Activated B cell treated with CpG ODN at 0.5 μM for 24 hours (primary cell): ENCODE measurements at regions of chr10 and their contacts with region 1.

Region 1: GRCh38 chr10:119165171-119166110 is at the start of gene SFXN4:
- DNase-seq: peak; percentile 83
- ATAC-seq: peak; percentile 93
- H3K4me3 Mint-ChIP-seq: peak within 1 kb of the TSS; percentile 92
- H3K27ac Mint-ChIP-seq: peak within 1 kb of the TSS; percentile 88
- H3K4me1 Mint-ChIP-seq: peaks cover 18% of the 10 kb centered on the region
- H3K27me3 Mint-ChIP-seq: no peaks in the 10 kb centered on the region
- CTCF ChIP-seq: no peak
- total RNA-seq, gene SFXN4: 18.4 and 21.7 TPM in 2 replicates

Region 2: GRCh38 chr10:119030421-119031250 is 134.8 kb before region 1 on chr10:
- CTCF ChIA-PET with region 1: no interaction called
- POLR2A ChIA-PET with region 1: interaction called, 4 read pairs
- intact Hi-C with region 1: loop called (anchors 1 kb)
- DNase-seq: peak; percentile 72
- ATAC-seq: peak; percentile 80
- H3K4me3 Mint-ChIP-seq: peak overlapping the region; percentile 75
- H3K27ac Mint-ChIP-seq: peak overlapping the region; percentile 68
- H3K4me1 Mint-ChIP-seq: peaks cover 22% of the 10 kb centered on the region
- H3K27me3 Mint-ChIP-seq: peaks cover 23% of the 10 kb centered on the region
- CTCF ChIP-seq: no peak

Region 3: GRCh38 chr10:119103903-119104652 is 61.4 kb before region 1 on chr10 and contains the start of gene DENND10:
- CTCF ChIA-PET with region 1: no interaction called
- POLR2A ChIA-PET with region 1: interaction called, 6 read pairs
- intact Hi-C with region 1: loop called (anchors 1 kb)
- DNase-seq: peak; percentile 69
- ATAC-seq: peak; percentile 91
- H3K4me3 Mint-ChIP-seq: peak within 1 kb of the TSS; percentile 75
- H3K27ac Mint-ChIP-seq: peak within 1 kb of the TSS; percentile 68
- H3K4me1 Mint-ChIP-seq: peaks cover 16% of the 10 kb centered on the region
- H3K27me3 Mint-ChIP-seq: no peaks in the 10 kb centered on the region
- CTCF ChIP-seq: no peak
- total RNA-seq, gene DENND10: 14.4 and 15.0 TPM in 2 replicates

Region 4: GRCh38 chr10:119178372-119179119 is 13.1 kb after region 1 on chr10 and contains the start of gene PRDX3:
- CTCF ChIA-PET with region 1: no interaction called
- POLR2A ChIA-PET with region 1: interaction called, 10 read pairs
- intact Hi-C with region 1: loop called (anchors 1 kb)
- DNase-seq: peak; percentile 92
- ATAC-seq: peak; percentile 99
- H3K4me3 Mint-ChIP-seq: peak within 1 kb of the TSS; percentile 98
- H3K27ac Mint-ChIP-seq: peak within 1 kb of the TSS; percentile 93
- H3K4me1 Mint-ChIP-seq: peaks cover 26% of the 10 kb centered on the region
- H3K27me3 Mint-ChIP-seq: no peaks in the 10 kb centered on the region
- CTCF ChIP-seq: no peak
- total RNA-seq, gene PRDX3: 62.8 and 63.7 TPM in 2 replicates

Region 5: DNA sequence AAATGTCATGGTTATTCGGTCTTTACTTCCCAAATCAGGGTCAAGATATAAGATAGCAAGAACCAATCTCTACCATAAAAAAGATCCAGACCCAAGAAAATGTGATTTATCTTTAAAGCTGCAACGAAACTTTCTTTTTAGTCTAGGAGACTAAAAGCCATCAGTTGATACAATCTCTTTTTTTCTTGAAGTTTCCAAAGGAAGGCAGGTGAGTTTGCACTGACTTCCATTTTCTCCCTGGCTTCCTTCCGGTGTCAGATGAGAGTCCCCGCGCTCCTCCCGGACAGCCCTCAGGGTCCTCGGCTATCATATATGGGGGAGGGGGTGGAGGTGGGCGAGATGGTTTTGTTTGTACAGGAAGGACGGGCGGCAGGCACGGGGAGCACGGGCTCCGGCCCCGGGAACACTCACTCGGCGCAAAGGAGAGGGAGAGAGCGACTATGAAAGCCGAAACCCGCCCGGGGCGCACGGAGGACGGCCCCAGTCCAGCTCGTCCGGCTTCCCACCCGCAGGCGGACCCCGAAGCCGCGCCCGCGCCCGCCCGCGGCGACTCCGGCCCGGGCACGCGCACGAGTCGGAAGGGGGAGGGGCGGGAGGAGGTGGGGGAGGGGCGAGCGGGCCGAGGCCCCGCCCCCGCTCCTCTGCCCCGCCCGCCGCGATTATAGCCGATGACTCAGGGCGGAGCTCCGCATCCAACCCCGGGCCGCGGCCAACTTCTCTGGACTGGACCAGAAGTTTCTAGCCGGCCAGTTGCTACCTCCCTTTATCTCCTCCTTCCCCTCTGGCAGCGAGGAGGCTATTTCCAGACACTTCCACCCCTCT is 485.5 kb after region 1 on chr10 and contains the start of gene BAG3:
- CTCF ChIA-PET with region 1: no interaction called
- POLR2A ChIA-PET with region 1: no interaction called
- intact Hi-C with region 1: loop called (anchors 1 kb)
- DNase-seq: peak; percentile 73
- ATAC-seq: peak; percentile 93
- H3K4me3 Mint-ChIP-seq: peak within 1 kb of the TSS; percentile 97
- H3K27ac Mint-ChIP-seq: peak within 1 kb of the TSS; percentile 95
- H3K4me1 Mint-ChIP-seq: peaks cover 16% of the 10 kb centered on the region
- H3K27me3 Mint-ChIP-seq: no peaks in the 10 kb centered on the region
- CTCF ChIP-seq: no peak
- total RNA-seq, gene BAG3: 4.3 and 4.7 TPM in 2 replicates

Region 6: GRCh38 chr10:119872860-119873681 is 707.6 kb after region 1 on chr10:
- CTCF ChIA-PET with region 1: no interaction called
- POLR2A ChIA-PET with region 1: no interaction called
- intact Hi-C with region 1: loop called (anchors 1 kb)
- DNase-seq: peak; percentile 89
- ATAC-seq: peak; percentile 92
- H3K4me3 Mint-ChIP-seq: peak overlapping the region; percentile 88
- H3K27ac Mint-ChIP-seq: peak overlapping the region; percentile 85
- H3K4me1 Mint-ChIP-seq: peaks cover 40% of the 10 kb centered on the region
- H3K27me3 Mint-ChIP-seq: no peaks in the 10 kb centered on the region
- CTCF ChIP-seq: no peak